Activated naive CD8-positive, alpha-beta T cell treated with anti-CD3 and anti-CD28 coated beads, Interleukin-2, amount 10 ng/mL, durations not matched to agents 7 days and 5 days (primary cell): ENCODE measurements at regions of chr11 and their contacts with region 1.

Region 1: GRCh38 chr11:128290106-128290840 is 297.1 kb downstream of the ETS1 start:
- DNase-seq: peak; percentile 76
- ATAC-seq: peak; percentile 75
- H3K4me3 Mint-ChIP-seq: peak overlapping the region; percentile 93
- H3K27ac Mint-ChIP-seq: peak overlapping the region; percentile 82
- H3K4me1 Mint-ChIP-seq: peaks cover 62% of the 10 kb centered on the region
- H3K27me3 Mint-ChIP-seq: no peaks in the 10 kb centered on the region

Region 2: GRCh38 chr11:128279866-128280265 is 10.4 kb before region 1 on chr11:
- POLR2A ChIA-PET with region 1: no interaction called
- DNase-seq: no peak
- ATAC-seq: no peak
- H3K4me3 Mint-ChIP-seq: no peak overlapping the region
- H3K27ac Mint-ChIP-seq: no peak overlapping the region
- H3K4me1 Mint-ChIP-seq: peaks cover under 1% of the 10 kb centered on the region
- H3K27me3 Mint-ChIP-seq: peaks cover 11% of the 10 kb centered on the region

Region 3: GRCh38 chr11:128323381-128323780 is 33.1 kb after region 1 on chr11:
- POLR2A ChIA-PET with region 1: interaction called, 56 read pairs
- DNase-seq: no peak
- ATAC-seq: peak; percentile 17
- H3K4me3 Mint-ChIP-seq: peak overlapping the region; percentile 84
- H3K27ac Mint-ChIP-seq: peak overlapping the region; percentile 98
- H3K4me1 Mint-ChIP-seq: peaks cover 79% of the 10 kb centered on the region
- H3K27me3 Mint-ChIP-seq: no peaks in the 10 kb centered on the region

Region 4: GRCh38 chr11:128354476-128354875 is 64.2 kb after region 1 on chr11:
- POLR2A ChIA-PET with region 1: no interaction called
- DNase-seq: no peak
- ATAC-seq: no peak
- H3K4me3 Mint-ChIP-seq: no peak overlapping the region
- H3K27ac Mint-ChIP-seq: no peak overlapping the region
- H3K4me1 Mint-ChIP-seq: peaks cover 14% of the 10 kb centered on the region
- H3K27me3 Mint-ChIP-seq: peaks cover 2% of the 10 kb centered on the region

Region 5: DNA sequence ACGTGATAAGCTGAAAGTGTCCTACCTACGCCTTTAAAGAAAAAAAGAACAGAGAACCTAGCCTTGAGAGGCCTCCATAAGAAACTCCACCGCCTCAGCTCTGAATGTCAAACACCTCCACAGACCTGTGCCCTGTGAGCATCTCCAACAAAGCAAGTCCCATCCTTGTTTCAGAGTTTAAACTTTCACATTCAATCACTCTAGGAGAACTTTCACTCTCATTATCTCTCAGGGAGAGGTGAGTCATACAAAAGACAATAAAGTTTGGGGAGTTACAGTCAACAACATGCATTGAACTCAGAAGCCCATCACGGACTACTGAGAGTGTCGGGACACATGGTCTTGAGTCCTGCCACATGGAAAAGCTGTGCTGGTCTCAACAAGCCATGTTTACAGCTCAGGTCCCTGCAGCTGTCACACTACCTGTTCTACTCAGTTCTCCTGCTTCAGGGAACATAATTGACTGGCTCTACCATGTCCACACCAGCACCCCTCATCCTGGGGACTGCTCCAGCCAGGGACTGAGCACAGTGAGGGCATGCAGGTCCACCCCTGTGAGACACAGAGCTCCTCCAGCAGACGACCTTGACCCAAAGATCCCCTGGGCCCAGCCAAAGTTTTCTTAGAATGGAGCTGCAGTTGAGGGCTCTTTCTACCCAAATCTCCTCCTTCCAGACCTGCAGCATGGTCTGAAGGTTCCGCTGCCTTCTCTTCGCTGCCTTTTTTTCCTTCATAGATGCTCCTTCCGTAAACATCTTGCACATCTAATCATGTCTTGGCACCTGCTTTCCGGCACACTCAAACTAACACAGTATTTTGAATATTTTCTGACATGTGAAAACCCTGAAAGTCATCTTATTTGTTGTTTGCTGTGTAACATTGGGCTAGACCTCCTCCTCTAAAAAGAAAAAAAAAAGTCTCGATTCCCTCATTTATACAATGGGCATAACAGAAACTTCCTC is 182.1 kb after region 1 on chr11:
- POLR2A ChIA-PET with region 1: interaction called, 15 read pairs
- DNase-seq: no peak
- ATAC-seq: peak; percentile 49
- H3K4me3 Mint-ChIP-seq: peak overlapping the region; percentile 74
- H3K27ac Mint-ChIP-seq: peak overlapping the region; percentile 97
- H3K4me1 Mint-ChIP-seq: peaks cover 88% of the 10 kb centered on the region
- H3K27me3 Mint-ChIP-seq: no peaks in the 10 kb centered on the region

Region 6: DNA sequence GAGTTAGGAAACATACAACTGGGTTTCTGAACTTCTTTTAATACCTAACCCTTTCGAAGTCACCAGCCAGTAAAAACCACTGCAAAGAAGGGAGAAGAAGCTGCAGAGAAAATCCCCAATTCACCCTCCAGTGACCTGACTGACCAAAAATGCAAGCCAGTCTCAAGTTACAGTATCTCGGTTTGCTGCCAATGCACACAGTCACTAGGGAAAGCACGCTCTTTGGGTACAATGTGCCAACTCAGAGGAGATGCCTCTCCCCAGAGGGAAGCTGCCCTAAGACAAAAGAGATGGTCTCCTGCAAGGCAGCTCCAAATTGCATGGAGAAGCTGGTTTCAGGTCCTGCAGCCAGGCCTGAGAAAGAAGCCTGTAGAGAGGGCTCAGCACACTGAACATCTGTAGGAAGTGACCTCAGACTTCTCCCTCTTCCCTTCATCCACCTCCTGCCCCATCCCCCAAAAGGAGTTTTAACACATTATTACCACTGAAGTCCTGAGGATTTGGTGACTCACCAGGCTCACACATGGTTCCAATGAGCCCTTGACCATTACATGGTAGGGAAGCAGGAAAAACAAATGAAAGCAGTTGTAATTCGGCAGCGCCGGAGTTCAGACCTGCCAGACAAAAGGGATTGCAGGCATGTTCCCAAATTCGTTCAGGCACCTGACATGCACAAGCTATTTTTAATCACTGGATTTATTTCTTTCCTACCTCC is 206.9 kb after region 1 on chr11:
- POLR2A ChIA-PET with region 1: interaction called, 23 read pairs
- DNase-seq: peak; percentile 36
- ATAC-seq: no peak
- H3K4me3 Mint-ChIP-seq: peak overlapping the region; percentile 78
- H3K27ac Mint-ChIP-seq: peak overlapping the region; percentile 93
- H3K4me1 Mint-ChIP-seq: peaks cover 93% of the 10 kb centered on the region
- H3K27me3 Mint-ChIP-seq: no peaks in the 10 kb centered on the region

Region 7: GRCh38 chr11:128512474-128512996 is 222.3 kb after region 1 on chr11:
- POLR2A ChIA-PET with region 1: interaction called, 160 read pairs
- DNase-seq: peak; percentile 72
- ATAC-seq: peak; percentile 50
- H3K4me3 Mint-ChIP-seq: peak overlapping the region; percentile 98
- H3K27ac Mint-ChIP-seq: peak overlapping the region; percentile 97
- H3K4me1 Mint-ChIP-seq: peaks cover 84% of the 10 kb centered on the region
- H3K27me3 Mint-ChIP-seq: no peaks in the 10 kb centered on the region

Region 8: GRCh38 chr11:128624269-128625175 is 334.2 kb after region 1 on chr11:
- POLR2A ChIA-PET with region 1: interaction called, 46 read pairs
- DNase-seq: peak; percentile 72
- ATAC-seq: peak; percentile 65
- H3K4me3 Mint-ChIP-seq: peak overlapping the region; percentile 77
- H3K27ac Mint-ChIP-seq: peak overlapping the region; percentile 92
- H3K4me1 Mint-ChIP-seq: peaks cover 69% of the 10 kb centered on the region
- H3K27me3 Mint-ChIP-seq: no peaks in the 10 kb centered on the region